ENCODE measurements at regions of chr2 and their contacts with region 1.

Region 1: DNA sequence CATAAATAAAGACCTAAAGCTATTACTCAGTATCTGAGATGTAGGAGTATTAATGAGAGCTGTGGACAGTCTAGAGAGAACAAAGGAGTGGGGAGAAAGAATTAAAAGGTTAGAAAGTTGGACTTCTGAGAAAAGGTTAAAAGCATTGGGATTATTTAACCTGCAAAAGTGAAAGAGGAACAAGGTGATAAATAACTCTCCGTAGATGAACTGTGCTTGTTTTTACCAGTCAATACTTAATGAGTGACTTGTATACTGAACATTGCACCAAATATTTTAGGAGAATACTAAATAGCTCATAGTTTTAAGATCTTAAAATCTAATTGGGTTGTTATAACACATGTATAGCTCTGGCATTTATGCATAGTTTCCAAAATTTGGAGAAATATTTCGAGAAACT is 137.5 kb downstream of the GPD2 start:
- DNase-seq: no peak
- H3K4me3 ChIP-seq: no peak overlapping the region
- H3K27ac ChIP-seq: no peak overlapping the region
- H3K4me1 ChIP-seq: no peaks in the 10 kb centered on the region
- H3K27me3 ChIP-seq: no peaks in the 10 kb centered on the region
- CTCF ChIP-seq: no peak

Region 2: GRCh38 chr2:156182141-156182540 is 391.6 kb before region 1 on chr2:
- dilution Hi-C with region 1: loop called (anchors 10 kb)
- DNase-seq: peak; percentile 17
- H3K4me3 ChIP-seq: peak overlapping the region in 2 of 3 experiments; percentile 16 to 46
- H3K27ac ChIP-seq: peak overlapping the region; percentile 86
- H3K4me1 ChIP-seq: peaks cover 23% of the 10 kb centered on the region
- H3K27me3 ChIP-seq: no peaks in the 10 kb centered on the region
- CTCF ChIP-seq: no peak

Region 3: GRCh38 chr2:156486147-156486546 is 87.6 kb before region 1 on chr2:
- dilution Hi-C with region 1: no loop called
- DNase-seq: no peak
- H3K4me3 ChIP-seq: no peak overlapping the region
- H3K27ac ChIP-seq: no peak overlapping the region
- H3K4me1 ChIP-seq: peaks cover 4% of the 10 kb centered on the region
- H3K27me3 ChIP-seq: no peaks in the 10 kb centered on the region
- CTCF ChIP-seq: no peak

Region 4: DNA sequence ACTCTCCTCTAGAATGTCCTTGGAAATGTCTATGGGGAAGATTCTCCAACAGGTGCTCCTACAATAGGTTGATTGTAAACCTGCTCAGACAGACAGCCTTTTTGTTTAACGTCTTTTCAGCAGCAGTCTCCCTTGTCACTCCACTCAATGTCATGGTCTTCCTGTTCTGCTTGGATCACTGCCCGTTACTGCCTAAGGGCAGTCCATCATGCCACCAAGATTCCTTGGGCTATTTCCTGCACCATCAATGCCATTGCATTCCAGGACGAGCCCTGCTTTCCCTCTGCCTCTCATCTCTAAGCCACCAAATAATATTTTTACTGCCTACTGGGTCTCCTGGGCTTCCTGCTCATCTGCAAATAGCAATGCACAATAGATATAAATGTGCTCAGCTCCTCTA is 586.4 kb after region 1 on chr2:
- dilution Hi-C with region 1: no loop called
- DNase-seq: no peak
- H3K4me3 ChIP-seq: no peak overlapping the region
- H3K27ac ChIP-seq: no peak overlapping the region
- H3K4me1 ChIP-seq: no peaks in the 10 kb centered on the region
- H3K27me3 ChIP-seq: no peaks in the 10 kb centered on the region
- CTCF ChIP-seq: no peak

Measured in keratinocyte (primary cell).